Naive thymus-derived CD4-positive, alpha-beta T cell (primary cell): ENCODE measurements at regions of chr2 and their contacts with region 1.

Region 1: GRCh38 chr2:63861220-63861822 is 19.6 kb downstream of the UGP2 start:
- DNase-seq: peak in 8 of 9 donors; percentile 23 to 79 (median 70)
- ATAC-seq: peak; percentile 81
- H3K4me3 ChIP-seq: no peak overlapping the region
- H3K4me3 Mint-ChIP-seq: no peak overlapping the region
- H3K27ac ChIP-seq: no peak overlapping the region
- H3K27ac Mint-ChIP-seq: peak overlapping the region in 5 of 9 donors; percentile 3 to 41 (median 18)
- H3K4me1 ChIP-seq: peaks cover 6 to 14% of the 10 kb centered on the region in 2 donors
- H3K4me1 Mint-ChIP-seq: peaks cover 14 to 54% (median 47%) of the 10 kb centered on the region in 7 donors
- H3K27me3 ChIP-seq: no peaks in the 10 kb centered on the region
- H3K27me3 Mint-ChIP-seq: no peaks in the 10 kb centered on the region

Region 2: DNA sequence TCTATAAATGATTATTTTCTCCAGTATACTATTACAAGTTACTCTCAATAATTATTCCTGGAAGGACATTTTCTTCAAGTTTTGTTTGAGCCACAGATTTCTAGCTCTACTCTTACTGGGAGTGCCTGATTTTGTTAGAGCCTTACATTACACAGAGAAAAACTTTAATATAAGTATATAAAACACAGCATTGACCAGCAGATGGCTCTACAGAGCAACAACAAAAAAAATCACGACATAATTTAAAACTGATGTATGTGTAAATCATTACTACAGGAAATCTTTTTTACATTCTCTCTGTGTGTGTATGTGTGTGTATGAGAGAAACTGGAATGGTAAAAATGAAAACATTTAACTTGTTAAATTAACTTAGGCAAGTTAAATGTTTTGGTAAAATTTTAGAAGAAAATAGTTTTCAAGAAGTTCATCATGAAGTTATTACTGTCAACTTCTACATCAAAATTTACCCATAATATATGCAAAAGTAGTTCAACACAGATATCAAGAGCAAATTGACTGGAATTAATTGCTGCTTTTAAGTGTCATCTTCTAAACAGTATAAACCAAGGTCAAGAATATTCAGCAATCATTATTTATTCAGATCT is 169.2 kb before region 1 on chr2:
- CTCF ChIA-PET with region 1: interaction called, 92 read pairs
- POLR2A ChIA-PET with region 1: no interaction called
- intact Hi-C with region 1: loop called (anchors 1 kb)
- DNase-seq: peak in 7 of 9 donors; percentile 18 to 61 (median 51)
- ATAC-seq: peak; percentile 74
- H3K4me3 ChIP-seq: no peak overlapping the region
- H3K4me3 Mint-ChIP-seq: no peak overlapping the region
- H3K27ac ChIP-seq: no peak overlapping the region
- H3K27ac Mint-ChIP-seq: no peak overlapping the region
- H3K4me1 ChIP-seq: no peaks in the 10 kb centered on the region
- H3K4me1 Mint-ChIP-seq: peaks cover 0 to 4% (median 0%) of the 10 kb centered on the region in 7 donors
- H3K27me3 ChIP-seq: no peaks in the 10 kb centered on the region
- H3K27me3 Mint-ChIP-seq: peaks cover 0 to 11% (median 0%) of the 10 kb centered on the region in 5 donors

Region 3: GRCh38 chr2:63698825-63699548 is 162.3 kb before region 1 on chr2:
- CTCF ChIA-PET with region 1: interaction called, 92 read pairs
- POLR2A ChIA-PET with region 1: no interaction called
- intact Hi-C with region 1: loop called (anchors 1 kb)
- DNase-seq: peak in 7 of 9 donors; percentile 6 to 48 (median 26)
- ATAC-seq: peak; percentile 84
- H3K4me3 ChIP-seq: no peak overlapping the region
- H3K4me3 Mint-ChIP-seq: no peak overlapping the region
- H3K27ac ChIP-seq: no peak overlapping the region
- H3K27ac Mint-ChIP-seq: no peak overlapping the region
- H3K4me1 ChIP-seq: no peaks in the 10 kb centered on the region
- H3K4me1 Mint-ChIP-seq: peaks cover 0 to 5% (median 0%) of the 10 kb centered on the region in 7 donors
- H3K27me3 ChIP-seq: no peaks in the 10 kb centered on the region
- H3K27me3 Mint-ChIP-seq: peaks cover 0 to 2% (median 0%) of the 10 kb centered on the region in 5 donors

Region 4: DNA sequence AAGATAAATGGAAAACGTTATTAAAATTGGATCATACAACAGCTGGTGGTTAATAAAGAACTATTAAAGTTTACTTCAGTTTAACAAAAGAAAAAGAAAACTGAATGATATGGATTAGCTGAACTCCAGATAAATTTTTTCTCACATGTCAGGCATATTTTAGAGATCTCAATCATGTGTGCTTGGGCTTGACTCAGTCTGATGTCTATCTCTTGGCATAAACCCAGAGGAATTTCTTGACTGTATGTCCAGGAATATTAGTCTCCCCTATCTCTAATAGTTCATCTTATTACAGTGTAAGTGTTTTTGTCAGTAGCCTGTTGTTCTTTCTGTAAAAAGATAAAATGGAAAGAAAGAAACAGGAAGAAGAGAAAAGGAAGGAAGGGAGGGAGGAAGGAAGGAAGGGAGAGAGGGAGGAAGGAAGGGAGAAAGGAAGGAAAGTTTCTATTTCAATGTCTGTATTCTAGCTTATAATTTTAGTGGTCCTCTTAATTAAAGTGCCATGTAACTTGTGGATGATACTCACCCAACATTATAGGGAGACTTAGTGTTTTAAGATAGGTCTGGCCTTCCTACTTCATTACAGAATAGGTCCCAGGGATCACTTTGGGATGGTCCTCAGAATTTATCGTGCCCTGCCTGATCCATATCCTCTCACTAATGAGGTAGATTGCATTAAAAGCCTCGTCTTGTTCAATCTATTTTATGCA is 119.3 kb before region 1 on chr2:
- CTCF ChIA-PET with region 1: interaction called, 8 read pairs
- POLR2A ChIA-PET with region 1: no interaction called
- intact Hi-C with region 1: loop called in 1 of 2 experiments (anchors 2 kb)
- DNase-seq: no peak
- ATAC-seq: no peak
- H3K4me3 ChIP-seq: no peak overlapping the region
- H3K4me3 Mint-ChIP-seq: no peak overlapping the region
- H3K27ac ChIP-seq: no peak overlapping the region
- H3K27ac Mint-ChIP-seq: no peak overlapping the region
- H3K4me1 ChIP-seq: no peaks in the 10 kb centered on the region
- H3K4me1 Mint-ChIP-seq: peaks cover 0 to 2% (median 0%) of the 10 kb centered on the region in 7 donors
- H3K27me3 ChIP-seq: no peaks in the 10 kb centered on the region
- H3K27me3 Mint-ChIP-seq: peaks cover 0 to 21% (median 0%) of the 10 kb centered on the region in 5 donors

Region 5: GRCh38 chr2:63871864-63872263 is 10.5 kb after region 1 on chr2:
- CTCF ChIA-PET with region 1: interaction called, 16 read pairs
- POLR2A ChIA-PET with region 1: no interaction called
- intact Hi-C with region 1: no loop called
- DNase-seq: no peak
- ATAC-seq: no peak
- H3K4me3 ChIP-seq: no peak overlapping the region
- H3K4me3 Mint-ChIP-seq: no peak overlapping the region
- H3K27ac ChIP-seq: no peak overlapping the region
- H3K27ac Mint-ChIP-seq: peak overlapping the region in 2 of 9 donors; percentile 12 to 14
- H3K4me1 ChIP-seq: no peaks in the 10 kb centered on the region
- H3K4me1 Mint-ChIP-seq: peaks cover 20 to 62% (median 49%) of the 10 kb centered on the region in 7 donors
- H3K27me3 ChIP-seq: no peaks in the 10 kb centered on the region
- H3K27me3 Mint-ChIP-seq: no peaks in the 10 kb centered on the region

Region 6: DNA sequence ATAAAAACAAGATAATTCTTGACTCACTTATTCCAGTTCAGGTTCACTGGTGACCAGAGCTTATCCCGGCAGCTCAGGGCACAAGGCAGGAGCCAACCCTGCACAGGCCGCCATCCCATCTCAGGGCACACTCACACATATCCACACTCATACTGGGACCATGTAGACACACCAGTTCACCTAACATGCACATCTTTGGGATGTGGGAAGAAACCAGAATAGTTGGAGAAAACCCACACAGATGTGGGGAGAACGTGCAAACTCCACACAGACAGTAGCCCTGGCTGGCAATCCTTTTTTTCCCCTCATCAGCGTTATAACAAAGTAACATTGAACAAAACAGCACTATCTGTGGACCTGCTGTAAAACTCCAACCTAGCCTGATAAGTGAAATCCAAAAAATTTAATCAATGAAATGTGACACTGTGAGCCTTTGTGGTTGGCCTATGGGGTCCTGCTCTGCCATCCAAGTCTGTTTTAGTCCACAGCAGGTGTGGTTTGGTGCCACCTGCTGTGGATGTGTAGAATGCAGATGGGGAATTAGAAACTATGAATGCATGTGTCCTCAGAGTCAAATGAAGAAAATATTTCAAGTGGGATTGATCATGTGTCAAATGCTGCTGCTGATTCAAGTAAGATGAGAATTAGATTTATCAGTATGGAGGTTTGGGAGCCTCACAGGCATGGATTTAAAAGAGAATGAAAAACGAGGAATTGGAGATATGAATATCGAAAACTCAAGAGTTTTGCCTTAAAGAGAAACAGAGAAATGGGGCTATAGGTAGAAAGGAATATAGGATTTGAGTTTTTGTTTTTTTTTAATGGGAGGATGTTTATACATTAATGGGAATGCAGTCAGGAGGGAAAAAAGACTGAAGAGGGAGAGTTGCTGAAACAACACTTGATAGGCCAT is 27.4 kb after region 1 on chr2:
- CTCF ChIA-PET with region 1: interaction called, 3 read pairs
- POLR2A ChIA-PET with region 1: interaction called, 4 read pairs
- intact Hi-C with region 1: loop called in 1 of 2 experiments (anchors 2 kb)
- DNase-seq: peak in 8 of 9 donors; percentile 16 to 44 (median 32)
- ATAC-seq: peak; percentile 81
- H3K4me3 ChIP-seq: no peak overlapping the region
- H3K4me3 Mint-ChIP-seq: no peak overlapping the region
- H3K27ac ChIP-seq: no peak overlapping the region
- H3K27ac Mint-ChIP-seq: peak overlapping the region in 7 of 9 donors; percentile 9 to 71 (median 42)
- H3K4me1 ChIP-seq: no peaks in the 10 kb centered on the region
- H3K4me1 Mint-ChIP-seq: peaks cover 0 to 8% (median 0%) of the 10 kb centered on the region in 7 donors
- H3K27me3 ChIP-seq: no peaks in the 10 kb centered on the region
- H3K27me3 Mint-ChIP-seq: no peaks in the 10 kb centered on the region

Region 7: DNA sequence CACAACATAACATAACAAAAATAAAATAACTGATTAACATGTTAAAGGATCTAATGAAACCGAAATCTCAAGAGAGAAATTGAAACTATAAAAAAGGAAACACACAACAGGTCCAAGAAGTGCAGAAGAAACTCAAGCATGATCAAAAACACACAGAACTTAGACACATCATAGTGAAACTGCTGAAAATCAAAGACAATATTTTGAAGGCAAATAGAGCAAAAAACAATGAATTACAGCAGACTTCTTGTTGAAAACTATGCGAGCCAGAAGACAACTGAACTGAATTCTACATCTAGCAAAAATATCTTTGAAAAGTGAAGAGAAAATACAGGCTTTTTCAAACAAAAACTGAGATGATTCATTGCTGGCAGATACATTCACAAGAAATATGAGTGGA is 41.7 kb after region 1 on chr2:
- CTCF ChIA-PET with region 1: no interaction called
- POLR2A ChIA-PET with region 1: no interaction called
- intact Hi-C with region 1: no loop called
- DNase-seq: no peak
- ATAC-seq: no peak
- H3K4me3 ChIP-seq: no peak overlapping the region
- H3K4me3 Mint-ChIP-seq: peak overlapping the region in 2 of 10 donors; percentile 17 to 36
- H3K27ac ChIP-seq: no peak overlapping the region
- H3K27ac Mint-ChIP-seq: peak overlapping the region in 4 of 9 donors; percentile 34 to 52 (median 45)
- H3K4me1 ChIP-seq: peaks cover 0 to 4% of the 10 kb centered on the region in 2 donors
- H3K4me1 Mint-ChIP-seq: peaks cover 4 to 15% (median 11%) of the 10 kb centered on the region in 7 donors
- H3K27me3 ChIP-seq: no peaks in the 10 kb centered on the region
- H3K27me3 Mint-ChIP-seq: no peaks in the 10 kb centered on the region